ENCODE measurements at regions of chr14 and their contacts with region 1.

Region 1: GRCh38 chr14:102390064-102390855 is 27.5 kb downstream of the TECPR2 start:
- DNase-seq: no peak
- ATAC-seq: no peak
- H3K4me3 ChIP-seq: no peak overlapping the region
- H3K27ac ChIP-seq: peak overlapping the region in 1 of 4 donors; percentile 14
- H3K4me1 ChIP-seq: peaks cover 0 to 14% of the 10 kb centered on the region in 2 donors
- H3K27me3 ChIP-seq: no peaks in the 10 kb centered on the region
- CTCF ChIP-seq: no peak
- POLR2A ChIP-seq: no peak

Region 2: GRCh38 chr14:101865288-101865687 is 525.0 kb before region 1 on chr14:
- in situ Hi-C with region 1: no loop called
- intact Hi-C with region 1: no loop called
- DNase-seq: no peak
- ATAC-seq: no peak
- H3K4me3 ChIP-seq: no peak overlapping the region
- H3K27ac ChIP-seq: no peak overlapping the region
- H3K4me1 ChIP-seq: peaks cover 3 to 6% of the 10 kb centered on the region in 2 donors
- H3K27me3 ChIP-seq: no peaks in the 10 kb centered on the region
- CTCF ChIP-seq: no peak
- POLR2A ChIP-seq: no peak

Region 3: DNA sequence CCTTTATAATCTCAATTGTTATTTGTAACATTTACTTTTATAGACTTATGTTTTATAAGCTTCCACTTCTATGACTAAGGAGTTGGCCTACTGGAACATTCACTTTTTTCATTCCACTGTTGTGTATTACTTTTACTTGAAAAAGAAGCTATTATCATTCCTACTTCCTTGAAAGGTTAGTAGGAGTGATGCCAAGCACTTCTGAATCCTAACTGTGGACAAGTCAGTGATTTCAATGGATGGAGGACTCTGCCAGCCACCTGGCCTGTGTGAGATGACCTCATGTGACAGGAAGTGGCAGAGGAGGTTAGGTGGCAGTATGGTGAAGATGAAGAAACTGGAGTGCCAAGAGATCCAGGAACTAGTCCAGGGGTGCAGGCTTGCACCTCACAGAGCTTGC is 18.5 kb after region 1 on chr14:
- in situ Hi-C with region 1: no loop called
- intact Hi-C with region 1: loop called (anchors 2 kb)
- DNase-seq: peak; percentile 52 to 77
- ATAC-seq: peak; percentile 59 to 67
- H3K4me3 ChIP-seq: no peak overlapping the region
- H3K27ac ChIP-seq: peak overlapping the region; percentile 86 to 96 (median 90)
- H3K4me1 ChIP-seq: peaks cover 32 to 42% of the 10 kb centered on the region in 2 donors
- H3K27me3 ChIP-seq: no peaks in the 10 kb centered on the region
- CTCF ChIP-seq: no peak
- POLR2A ChIP-seq: no peak

Region 4: GRCh38 chr14:102545461-102546265 is 155.4 kb after region 1 on chr14:
- in situ Hi-C with region 1: no loop called
- intact Hi-C with region 1: no loop called
- DNase-seq: no peak
- ATAC-seq: no peak
- H3K4me3 ChIP-seq: no peak overlapping the region
- H3K27ac ChIP-seq: no peak overlapping the region
- H3K4me1 ChIP-seq: no peaks in the 10 kb centered on the region
- H3K27me3 ChIP-seq: peaks cover 24 to 30% (median 26%) of the 10 kb centered on the region in 3 donors
- CTCF ChIP-seq: no peak
- POLR2A ChIP-seq: no peak

Region 5: DNA sequence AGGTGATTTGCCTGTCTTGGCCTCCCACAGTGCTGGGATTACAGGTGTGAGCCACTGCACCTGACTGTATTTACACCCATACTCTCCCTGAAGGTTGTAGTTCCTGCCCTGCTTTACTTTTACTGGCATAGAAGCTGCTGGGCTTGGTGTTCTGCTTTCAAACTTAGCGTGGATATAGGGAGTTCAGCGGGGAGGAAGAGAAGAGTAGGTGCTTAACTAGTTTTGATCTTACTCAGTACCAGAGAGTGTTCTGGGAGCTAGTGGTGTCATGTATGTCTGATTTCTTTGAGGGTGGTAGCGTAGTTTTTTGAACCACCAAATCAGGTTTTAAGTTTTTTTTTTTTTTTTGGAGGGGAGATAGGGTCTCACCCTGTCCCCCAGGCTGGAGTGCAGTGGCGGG is 216.0 kb after region 1 on chr14:
- in situ Hi-C with region 1: no loop called
- intact Hi-C with region 1: no loop called
- DNase-seq: no peak
- ATAC-seq: no peak
- H3K4me3 ChIP-seq: no peak overlapping the region
- H3K27ac ChIP-seq: no peak overlapping the region
- H3K4me1 ChIP-seq: peaks cover 41 to 50% of the 10 kb centered on the region in 2 donors
- H3K27me3 ChIP-seq: no peaks in the 10 kb centered on the region
- CTCF ChIP-seq: no peak
- POLR2A ChIP-seq: no peak

Measured in gastrocnemius medialis (tissue), 4 donors.